ENCODE measurements at regions of chr12 and their contacts with region 1.

Region 1: DNA sequence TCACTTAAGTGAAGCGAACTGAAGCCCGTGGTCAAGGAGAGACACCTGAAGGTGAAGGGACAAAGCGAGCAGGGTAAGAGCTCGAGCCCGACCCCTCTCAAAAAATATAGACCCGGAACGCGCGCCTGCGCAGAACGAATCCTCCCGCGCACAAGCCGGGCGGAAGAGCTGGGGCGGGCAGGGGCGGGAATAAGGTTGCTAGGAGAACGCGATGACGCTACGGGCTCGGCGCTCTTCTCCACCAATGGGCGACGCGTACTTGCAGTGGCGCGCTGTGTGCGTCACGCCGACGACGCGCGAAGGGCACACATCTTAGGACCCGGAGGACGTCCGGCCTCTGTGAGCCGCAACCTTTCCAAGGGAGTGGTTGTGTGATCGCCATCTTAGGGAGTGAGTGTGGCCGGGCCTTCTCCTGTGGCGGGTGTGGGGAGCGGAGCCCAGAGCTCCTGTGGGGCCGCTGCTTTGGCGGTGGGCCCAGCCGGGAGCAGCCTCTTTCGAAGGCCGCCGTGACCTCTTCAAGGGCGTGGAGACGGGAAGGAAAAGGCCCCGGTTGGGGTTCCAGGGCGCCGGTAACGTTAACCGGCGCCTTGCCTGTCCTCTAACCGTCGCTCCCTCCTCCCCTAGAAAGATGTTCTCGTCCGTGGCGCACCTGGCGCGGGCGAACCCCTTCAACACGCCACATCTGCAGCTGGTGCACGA is at the start of gene SLC25A3:
- DNase-seq: peak; percentile 94
- ATAC-seq: peak; percentile 97
- H3K4me3 Mint-ChIP-seq: peak within 1 kb of the TSS; percentile 98
- H3K27ac Mint-ChIP-seq: peak within 1 kb of the TSS; percentile 97
- H3K4me1 Mint-ChIP-seq: peaks cover 28% of the 10 kb centered on the region
- H3K27me3 Mint-ChIP-seq: no peaks in the 10 kb centered on the region
- CTCF ChIP-seq: no peak
- total RNA-seq, gene SLC25A3: 665 to 672 TPM

Region 2: DNA sequence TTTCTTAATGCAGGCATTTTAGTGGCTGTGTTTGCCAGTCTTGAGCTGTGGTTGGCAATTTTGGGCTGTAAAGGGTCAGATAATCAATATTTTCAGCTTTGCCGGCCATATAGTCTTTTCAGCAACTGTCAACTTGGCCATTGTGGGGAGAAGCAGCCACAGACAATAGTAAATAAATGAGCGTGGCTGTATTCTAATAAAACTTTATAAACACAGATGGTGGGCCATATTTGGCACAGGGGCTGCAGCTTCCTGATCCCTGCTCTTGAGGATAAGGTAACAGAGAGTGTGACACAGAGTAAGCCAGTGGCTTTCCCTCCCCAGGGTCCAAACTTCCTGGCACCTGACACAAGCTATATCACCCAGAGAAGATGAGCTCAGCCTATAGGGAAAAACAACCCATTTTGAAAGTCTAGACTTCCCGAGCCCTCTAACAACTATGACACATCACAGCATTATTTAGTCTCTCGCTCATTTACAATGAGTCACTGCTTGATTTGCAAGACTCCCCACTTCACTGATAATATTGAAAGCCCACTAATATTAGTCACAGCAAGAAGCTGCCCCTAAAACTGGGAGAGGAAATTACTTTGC is 241.2 kb before region 1 on chr12:
- CTCF ChIA-PET with region 1: no interaction called
- POLR2A ChIA-PET with region 1: no interaction called
- intact Hi-C with region 1: no loop called
- DNase-seq: no peak
- ATAC-seq: peak; percentile 39
- H3K4me3 Mint-ChIP-seq: no peak overlapping the region
- H3K27ac Mint-ChIP-seq: no peak overlapping the region
- H3K4me1 Mint-ChIP-seq: peaks cover 2% of the 10 kb centered on the region
- H3K27me3 Mint-ChIP-seq: peaks cover 3% of the 10 kb centered on the region
- CTCF ChIP-seq: no peak

Region 3: GRCh38 chr12:98606357-98606988 is 13.0 kb after region 1 on chr12:
- CTCF ChIA-PET with region 1: interaction called, 3 read pairs
- POLR2A ChIA-PET with region 1: interaction called, 17 read pairs
- intact Hi-C with region 1: no loop called
- DNase-seq: no peak
- ATAC-seq: no peak
- H3K4me3 Mint-ChIP-seq: no peak overlapping the region
- H3K27ac Mint-ChIP-seq: no peak overlapping the region
- H3K4me1 Mint-ChIP-seq: peaks cover 5% of the 10 kb centered on the region
- H3K27me3 Mint-ChIP-seq: no peaks in the 10 kb centered on the region
- CTCF ChIP-seq: no peak

Region 4: GRCh38 chr12:98644711-98645402 is 51.4 kb after region 1 on chr12 and contains the starts of genes APAF1 and IKBIP:
- CTCF ChIA-PET with region 1: interaction called, 4 read pairs
- POLR2A ChIA-PET with region 1: interaction called, 26 read pairs
- intact Hi-C with region 1: loop called (anchors 2 kb)
- DNase-seq: peak; percentile 98
- ATAC-seq: peak; percentile 90
- H3K4me3 Mint-ChIP-seq: peak within 1 kb of the TSS; percentile 98
- H3K27ac Mint-ChIP-seq: peak within 1 kb of the TSS; percentile 96
- H3K4me1 Mint-ChIP-seq: peaks cover 15% of the 10 kb centered on the region
- H3K27me3 Mint-ChIP-seq: no peaks in the 10 kb centered on the region
- CTCF ChIP-seq: no peak
- total RNA-seq, gene APAF1: 14.3 to 17.9 TPM
- total RNA-seq, gene IKBIP: 34.9 to 35.4 TPM